A549 (cell line): ENCODE measurements at regions of chr17 and their contacts with region 1.

Region 1: DNA sequence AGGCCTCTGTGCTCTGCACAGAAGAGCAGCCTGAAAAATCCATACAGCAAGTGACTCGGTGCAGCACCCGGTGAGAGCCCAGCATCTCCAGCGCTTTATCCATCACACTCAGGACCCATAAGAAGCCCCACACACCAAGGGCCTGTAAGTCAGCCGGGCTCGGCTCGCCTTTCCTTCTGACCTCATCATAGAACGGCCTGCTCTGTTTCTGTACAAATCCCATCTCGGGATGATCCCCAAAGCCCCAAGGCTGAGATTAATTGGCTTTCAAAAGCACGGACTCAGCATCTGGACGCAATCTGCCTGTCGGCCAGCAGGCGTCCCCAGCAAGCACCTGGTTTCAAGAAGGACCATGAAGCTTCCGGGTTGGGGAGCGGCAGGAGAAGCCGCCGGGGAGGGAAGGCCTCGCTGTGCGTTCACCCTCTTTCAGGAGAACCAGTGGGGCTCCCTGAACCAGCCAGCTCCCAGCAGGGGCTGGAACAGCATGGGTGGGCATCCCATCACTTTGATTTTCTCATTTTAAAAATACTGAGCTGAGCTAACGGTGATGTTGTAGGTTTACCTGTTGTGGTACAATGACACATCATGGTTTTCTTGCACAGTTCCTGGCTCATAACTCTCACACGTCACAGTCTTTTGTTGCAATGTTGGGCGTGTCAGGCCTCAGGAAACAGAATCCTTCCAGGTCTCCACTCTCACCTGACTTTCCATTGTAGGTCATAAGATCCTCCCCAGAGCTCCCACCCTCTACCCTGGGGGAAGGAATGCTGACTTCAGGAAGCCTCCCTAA is 6.7 kb downstream of the CCDC57 start:
- DNase-seq: peak; percentile 91 to 94
- ATAC-seq: peak; percentile 91 to 94
- H3K4me3 ChIP-seq: no peak overlapping the region
- H3K27ac ChIP-seq: peak overlapping the region; percentile 84 to 86
- H3K4me1 ChIP-seq: peaks cover 24% of the 10 kb centered on the region
- CTCF ChIP-seq: peak; percentile 78
- EP300 ChIP-seq: no peak
- POLR2A ChIP-seq: peak; percentile 81
- RAD21 ChIP-seq: peak; percentile 72 to 75

Region 2: DNA sequence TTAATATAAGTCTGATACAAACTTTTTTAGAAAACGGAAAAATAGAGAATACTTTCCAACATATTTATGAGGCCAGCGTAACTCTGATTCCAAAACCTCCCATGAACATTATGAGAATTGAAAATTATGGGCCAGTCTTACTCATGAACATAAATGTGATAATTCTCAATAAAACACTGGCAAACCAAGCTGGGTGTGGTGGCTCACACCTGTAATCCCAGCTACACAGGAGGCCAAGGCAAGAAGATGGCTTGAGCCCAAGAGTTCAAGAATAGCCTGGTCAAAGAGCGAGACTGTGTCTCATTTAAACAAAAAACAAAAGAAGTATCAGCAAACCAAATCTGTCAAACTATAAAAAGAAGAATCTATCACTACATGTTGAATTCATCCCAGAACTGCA is 41.1 kb before region 1 on chr17:
- CTCF ChIA-PET with region 1: no interaction called
- POLR2A ChIA-PET with region 1: no interaction called
- DNase-seq: no peak
- ATAC-seq: no peak
- H3K4me3 ChIP-seq: no peak overlapping the region
- H3K27ac ChIP-seq: no peak overlapping the region
- H3K4me1 ChIP-seq: no peaks in the 10 kb centered on the region
- CTCF ChIP-seq: no peak
- EP300 ChIP-seq: no peak
- POLR2A ChIP-seq: no peak
- RAD21 ChIP-seq: no peak

Region 3: GRCh38 chr17:82188001-82188961 is 17.6 kb before region 1 on chr17:
- CTCF ChIA-PET with region 1: interaction called, 37 read pairs
- POLR2A ChIA-PET with region 1: interaction called, 3 read pairs
- DNase-seq: no peak
- ATAC-seq: peak in 1 of 2 experiments; percentile 49; a peak in 4 of 6 replicates
- H3K4me3 ChIP-seq: no peak overlapping the region
- H3K27ac ChIP-seq: no peak overlapping the region
- H3K4me1 ChIP-seq: no peaks in the 10 kb centered on the region
- CTCF ChIP-seq: no peak
- EP300 ChIP-seq: no peak
- POLR2A ChIP-seq: no peak
- RAD21 ChIP-seq: no peak

Region 4: DNA sequence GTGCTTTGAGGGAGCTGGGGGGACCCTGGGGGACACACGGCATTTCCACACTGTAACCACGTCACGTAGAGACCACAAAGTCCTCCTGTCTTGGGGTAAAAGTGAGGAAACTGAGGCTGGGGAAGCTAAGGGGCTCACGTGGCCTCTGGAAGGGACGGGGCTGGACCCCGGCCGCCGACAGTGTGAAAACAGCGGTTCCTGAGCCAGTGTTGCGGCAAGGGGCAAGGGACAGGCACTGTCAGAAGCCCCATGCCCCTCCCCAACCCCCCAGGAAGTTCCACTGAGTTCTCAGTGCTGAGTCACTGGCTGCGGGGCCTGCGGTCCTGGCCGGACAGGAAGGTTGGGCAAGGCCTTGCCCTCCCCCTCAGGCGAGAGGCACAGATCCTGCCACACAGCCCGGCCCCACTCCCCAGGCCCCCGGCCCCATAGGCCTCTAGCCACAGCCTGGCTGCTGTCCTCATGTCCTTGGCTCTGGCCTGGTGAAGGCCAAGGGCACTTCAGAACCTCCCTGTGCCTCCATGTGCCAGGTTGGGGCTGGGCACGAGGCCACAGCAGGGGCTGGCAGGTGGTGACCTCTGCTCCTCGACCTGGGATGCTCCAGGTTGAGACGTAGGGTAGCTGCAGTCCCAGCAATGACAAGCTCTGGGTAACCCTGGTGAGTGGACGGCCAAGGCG is 11.8 kb after region 1 on chr17:
- CTCF ChIA-PET with region 1: interaction called, 38 read pairs
- POLR2A ChIA-PET with region 1: interaction called, 5 read pairs
- DNase-seq: peak in 1 of 2 experiments; percentile 83
- ATAC-seq: peak in 1 of 2 experiments; percentile 31; a peak in 3 of 6 replicates
- H3K4me3 ChIP-seq: no peak overlapping the region
- H3K27ac ChIP-seq: peak overlapping the region; percentile 96
- H3K4me1 ChIP-seq: peaks cover 57% of the 10 kb centered on the region
- CTCF ChIP-seq: no peak
- EP300 ChIP-seq: peak in 1 of 2 experiments; percentile 45; a peak in 1 of 5 replicates
- POLR2A ChIP-seq: no peak
- RAD21 ChIP-seq: no peak

Region 5: GRCh38 chr17:82230627-82231311 is 24.9 kb after region 1 on chr17:
- CTCF ChIA-PET with region 1: interaction called, 50 read pairs
- POLR2A ChIA-PET with region 1: interaction called, 4 read pairs
- DNase-seq: peak; percentile 79 to 92
- ATAC-seq: peak; percentile 42 to 73
- H3K4me3 ChIP-seq: peak overlapping the region; percentile 65
- H3K27ac ChIP-seq: peak overlapping the region; percentile 95 to 99
- H3K4me1 ChIP-seq: peaks cover 50% of the 10 kb centered on the region
- CTCF ChIP-seq: 0 out of 3 replicates have a peak, but pooled peaks have one; percentile 12
- EP300 ChIP-seq: no peak
- POLR2A ChIP-seq: no peak; the same call in 1 of the 2 replicates
- RAD21 ChIP-seq: no peak; a peak in 1 of 5 replicates

Region 6: DNA sequence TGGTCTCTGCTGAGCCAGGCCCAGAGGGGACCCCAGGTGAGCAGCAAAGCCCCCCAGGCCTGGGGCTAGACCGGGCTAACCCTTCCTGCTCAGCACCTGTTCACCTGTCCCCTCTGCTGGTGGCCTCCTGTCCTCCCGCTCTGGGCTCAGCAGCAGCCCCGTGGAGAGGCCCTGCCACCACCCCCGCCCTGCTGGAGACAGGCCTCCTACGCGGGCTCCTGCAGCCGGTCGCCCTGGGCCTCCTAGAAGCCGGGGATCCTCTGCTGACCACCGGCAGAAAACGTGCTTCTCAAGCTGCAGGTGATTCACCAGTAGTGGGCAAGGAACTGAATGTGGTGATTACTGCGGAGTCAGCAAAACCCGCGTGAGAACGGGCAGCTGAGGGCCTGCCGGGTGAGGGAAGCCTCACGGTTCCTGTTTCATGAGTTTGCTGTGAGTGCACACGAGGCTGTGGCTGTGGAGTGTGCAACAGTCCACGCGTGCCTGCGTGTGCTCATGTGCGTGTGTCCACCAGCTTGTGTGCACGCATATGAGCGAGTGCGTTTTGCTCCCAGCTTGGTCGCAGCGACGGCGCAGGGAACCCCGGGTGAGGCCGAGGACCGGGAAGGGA is 126.9 kb after region 1 on chr17:
- CTCF ChIA-PET with region 1: interaction called, 12 read pairs
- POLR2A ChIA-PET with region 1: no interaction called
- DNase-seq: peak; percentile 58 to 69
- ATAC-seq: peak; percentile 37 to 46
- H3K4me3 ChIP-seq: peak overlapping the region; percentile 66
- H3K27ac ChIP-seq: peak overlapping the region; percentile 89 to 93
- H3K4me1 ChIP-seq: peaks cover 55% of the 10 kb centered on the region
- CTCF ChIP-seq: no peak
- EP300 ChIP-seq: no peak
- POLR2A ChIP-seq: no peak
- RAD21 ChIP-seq: no peak

Region 7: GRCh38 chr17:82434216-82434565 is 228.3 kb after region 1 on chr17:
- CTCF ChIA-PET with region 1: no interaction called
- POLR2A ChIA-PET with region 1: no interaction called
- DNase-seq: no peak
- ATAC-seq: no peak
- H3K4me3 ChIP-seq: no peak overlapping the region
- H3K27ac ChIP-seq: no peak overlapping the region
- H3K4me1 ChIP-seq: no peaks in the 10 kb centered on the region
- CTCF ChIP-seq: no peak
- EP300 ChIP-seq: no peak
- POLR2A ChIP-seq: no peak
- RAD21 ChIP-seq: no peak